Activated T-helper 1 cell treated with anti-CD3 and anti-CD28 coated beads, Interleukin-12 subunit alpha, Interleukin-12 subunit beta, Interleukin-2, Interleukin-4 antibody, amounts not matched to agents 30 ng/mL and 10 ng/mL and 1 ng/mL, durations not matched to agents 14 hours and 24 hours and 36 hours (primary cell): ENCODE measurements at regions of chr4 and their contacts with region 1.

Region 1: DNA sequence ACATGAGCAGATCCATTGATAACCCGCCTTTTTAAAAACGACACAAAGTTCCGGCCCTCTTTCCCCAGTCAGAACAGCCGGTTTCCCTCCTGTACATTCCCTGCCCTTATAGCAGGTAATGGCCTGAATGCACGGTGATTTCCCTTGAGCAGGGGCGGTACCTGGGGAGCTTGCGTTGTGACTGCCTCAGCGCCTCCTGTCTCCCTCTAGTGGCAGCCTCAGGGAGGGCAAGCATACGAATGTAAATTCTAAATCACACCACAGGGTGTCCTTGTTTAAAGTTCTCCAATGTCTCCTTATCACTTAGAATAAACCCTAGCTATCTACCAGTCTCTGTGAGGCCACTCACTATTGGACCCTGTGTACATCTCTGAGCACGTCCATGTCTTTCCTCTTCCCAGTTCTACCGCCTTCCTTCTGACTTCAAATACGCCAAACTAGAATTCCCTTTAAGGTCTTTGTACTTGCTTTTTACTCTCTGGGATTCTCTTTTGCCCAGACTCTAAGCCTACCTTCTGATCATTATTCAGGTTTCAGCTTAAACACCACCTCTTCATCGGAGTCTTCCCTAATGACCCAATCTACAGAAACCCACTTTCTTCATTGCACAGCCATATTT is 18.4 kb upstream of the LDB2 start:
- DNase-seq: peak; percentile 71
- H3K4me3 Mint-ChIP-seq: no peak overlapping the region
- H3K27ac Mint-ChIP-seq: no peak overlapping the region
- H3K4me1 Mint-ChIP-seq: no peaks in the 10 kb centered on the region
- H3K27me3 Mint-ChIP-seq: no peaks in the 10 kb centered on the region

Region 2: DNA sequence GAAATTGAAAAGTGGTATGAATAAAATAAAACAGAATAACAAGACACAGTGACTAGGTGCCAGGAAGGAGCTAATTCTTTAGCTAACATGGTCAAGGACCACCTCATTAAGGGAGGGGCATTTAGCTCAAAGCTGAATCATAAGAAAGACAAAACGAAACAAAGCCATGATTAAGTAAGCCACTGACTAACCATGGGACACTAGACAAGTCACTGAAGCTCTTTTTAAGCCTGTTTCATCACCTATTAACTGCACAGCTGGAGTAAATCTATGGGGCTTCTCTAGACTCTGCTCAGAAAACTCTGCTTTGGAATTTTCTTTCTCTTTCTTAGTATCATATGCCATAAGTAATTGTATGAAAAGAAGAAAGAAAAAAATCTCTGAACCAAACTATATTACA is 1538.8 kb before region 1 on chr4:
- intact Hi-C with region 1: no loop called
- DNase-seq: no peak
- H3K4me3 Mint-ChIP-seq: no peak overlapping the region
- H3K27ac Mint-ChIP-seq: no peak overlapping the region
- H3K4me1 Mint-ChIP-seq: peaks cover 45% of the 10 kb centered on the region
- H3K27me3 Mint-ChIP-seq: peaks cover 1% of the 10 kb centered on the region

Region 3: GRCh38 chr4:16026160-16026761 is 890.6 kb before region 1 on chr4:
- intact Hi-C with region 1: loop called (anchors 5 kb)
- DNase-seq: peak; percentile 5
- H3K4me3 Mint-ChIP-seq: no peak overlapping the region
- H3K27ac Mint-ChIP-seq: no peak overlapping the region
- H3K4me1 Mint-ChIP-seq: no peaks in the 10 kb centered on the region
- H3K27me3 Mint-ChIP-seq: peaks cover 16% of the 10 kb centered on the region

Region 4: GRCh38 chr4:16289897-16290554 is 626.8 kb before region 1 on chr4:
- intact Hi-C with region 1: loop called (anchors 1 kb)
- DNase-seq: no peak
- H3K4me3 Mint-ChIP-seq: no peak overlapping the region
- H3K27ac Mint-ChIP-seq: no peak overlapping the region
- H3K4me1 Mint-ChIP-seq: no peaks in the 10 kb centered on the region
- H3K27me3 Mint-ChIP-seq: peaks cover 3% of the 10 kb centered on the region

Region 5: GRCh38 chr4:16794816-16795445 is 121.9 kb before region 1 on chr4:
- intact Hi-C with region 1: loop called (anchors 1 kb)
- DNase-seq: peak; percentile 1
- H3K4me3 Mint-ChIP-seq: no peak overlapping the region
- H3K27ac Mint-ChIP-seq: no peak overlapping the region
- H3K4me1 Mint-ChIP-seq: no peaks in the 10 kb centered on the region
- H3K27me3 Mint-ChIP-seq: no peaks in the 10 kb centered on the region

Region 6: GRCh38 chr4:16827794-16828724 is 88.8 kb before region 1 on chr4:
- intact Hi-C with region 1: loop called (anchors 1 kb)
- DNase-seq: no peak
- H3K4me3 Mint-ChIP-seq: no peak overlapping the region
- H3K27ac Mint-ChIP-seq: no peak overlapping the region
- H3K4me1 Mint-ChIP-seq: no peaks in the 10 kb centered on the region
- H3K27me3 Mint-ChIP-seq: peaks cover 2% of the 10 kb centered on the region

Region 7: GRCh38 chr4:17324386-17324830 is 407.6 kb after region 1 on chr4:
- intact Hi-C with region 1: loop called (anchors 1 kb)
- DNase-seq: peak; percentile 21
- H3K4me3 Mint-ChIP-seq: peak overlapping the region; percentile 61
- H3K27ac Mint-ChIP-seq: no peak overlapping the region
- H3K4me1 Mint-ChIP-seq: peaks cover 10% of the 10 kb centered on the region
- H3K27me3 Mint-ChIP-seq: peaks cover 8% of the 10 kb centered on the region

Region 8: DNA sequence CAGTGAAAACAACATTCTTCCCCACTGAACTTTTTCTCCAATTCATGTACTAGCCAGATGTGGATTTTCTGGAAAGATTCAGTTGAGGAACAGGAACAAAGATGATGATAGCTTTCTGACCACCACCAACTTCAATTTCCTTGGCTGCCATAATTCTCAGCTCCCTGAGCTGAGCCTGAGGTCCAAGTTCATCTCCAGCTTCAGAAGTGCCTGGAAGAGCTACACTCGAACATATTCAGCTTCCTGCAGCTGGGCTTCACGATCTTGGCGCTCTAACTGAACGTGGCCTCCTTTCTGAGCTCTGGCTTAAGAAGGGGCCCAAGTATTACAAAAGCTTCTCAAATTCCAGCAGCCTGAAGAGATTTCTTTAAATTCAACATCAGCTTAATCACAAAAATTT is 511.2 kb after region 1 on chr4:
- intact Hi-C with region 1: no loop called
- DNase-seq: no peak
- H3K4me3 Mint-ChIP-seq: no peak overlapping the region
- H3K27ac Mint-ChIP-seq: no peak overlapping the region
- H3K4me1 Mint-ChIP-seq: no peaks in the 10 kb centered on the region
- H3K27me3 Mint-ChIP-seq: peaks cover 2% of the 10 kb centered on the region

Region 9: GRCh38 chr4:17447675-17448298 is 531.0 kb after region 1 on chr4:
- intact Hi-C with region 1: loop called (anchors 1 kb)
- DNase-seq: peak; percentile 37
- H3K4me3 Mint-ChIP-seq: no peak overlapping the region
- H3K27ac Mint-ChIP-seq: no peak overlapping the region
- H3K4me1 Mint-ChIP-seq: no peaks in the 10 kb centered on the region
- H3K27me3 Mint-ChIP-seq: peaks cover 5% of the 10 kb centered on the region